ENCODE measurements at regions of chr2 and their contacts with region 1.

Region 1: DNA sequence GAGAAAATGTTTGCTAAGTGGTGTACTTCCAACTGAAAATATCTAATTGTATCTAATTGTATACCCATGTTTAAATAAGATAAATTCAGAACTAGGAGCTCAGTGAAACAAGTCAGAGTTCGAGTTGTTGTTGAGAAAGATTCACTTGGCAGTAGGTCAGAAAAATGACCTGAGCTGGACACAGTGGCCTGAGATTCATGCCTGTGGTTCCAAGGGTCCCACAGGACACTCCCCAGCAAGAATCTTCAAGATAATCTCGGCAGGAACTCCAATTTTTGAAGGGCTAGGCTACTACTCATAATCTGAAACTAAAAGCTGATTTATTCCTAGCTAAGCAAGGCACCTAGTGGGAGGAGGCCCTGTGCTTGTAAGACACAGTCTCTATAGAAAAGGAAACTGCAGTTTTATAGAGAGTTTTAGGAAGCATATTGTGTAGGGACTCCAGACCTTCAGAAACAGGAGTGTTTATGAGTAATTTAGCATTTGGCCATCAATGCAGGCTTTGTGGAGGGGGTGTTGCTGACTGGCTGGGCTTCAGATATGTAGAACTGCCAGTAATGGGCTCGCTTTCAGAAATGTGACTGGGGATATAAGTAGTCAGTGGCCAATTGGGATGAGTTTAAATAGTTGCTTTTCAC is 43.2 kb downstream of the SP140 start:
- DNase-seq: peak; percentile 36
- ATAC-seq: peak; percentile 59
- H3K4me3 ChIP-seq: no peak overlapping the region
- H3K27ac ChIP-seq: peak overlapping the region; percentile 76
- H3K4me1 ChIP-seq: peaks cover 28% of the 10 kb centered on the region
- H3K27me3 ChIP-seq: no peaks in the 10 kb centered on the region
- CTCF ChIP-seq: no peak
- EP300 ChIP-seq: no peak
- POLR2A ChIP-seq: no peak
- RAD21 ChIP-seq: no peak

Region 2: GRCh38 chr2:230234845-230235244 is 33.9 kb before region 1 on chr2:
- CTCF ChIA-PET with region 1: no interaction called
- POLR2A ChIA-PET with region 1: interaction called, 11 read pairs
- RAD21 ChIA-PET with region 1: interaction called, 3 read pairs
- SMC1A ChIA-PET with region 1: interaction called, 3 read pairs
- in situ Hi-C with region 1: no loop called
- intact Hi-C with region 1: loop called (anchors 1 kb)
- DNase-seq: peak; percentile 58
- ATAC-seq: peak; percentile 77
- H3K4me3 ChIP-seq: no peak overlapping the region
- H3K27ac ChIP-seq: no peak overlapping the region
- H3K4me1 ChIP-seq: peaks cover 28% of the 10 kb centered on the region
- H3K27me3 ChIP-seq: no peaks in the 10 kb centered on the region
- CTCF ChIP-seq: no peak
- EP300 ChIP-seq: peak in 1 of 2 experiments; percentile 69; a peak in 1 of 4 replicates
- POLR2A ChIP-seq: no peak
- RAD21 ChIP-seq: no peak

Region 3: GRCh38 chr2:230256733-230257332 is 11.9 kb before region 1 on chr2:
- CTCF ChIA-PET with region 1: interaction called, 4 read pairs
- POLR2A ChIA-PET with region 1: interaction called, 4 read pairs
- RAD21 ChIA-PET with region 1: interaction called, 5 read pairs
- SMC1A ChIA-PET with region 1: interaction called, 7 read pairs
- in situ Hi-C with region 1: no loop called
- intact Hi-C with region 1: loop called (anchors 1 kb)
- DNase-seq: no peak
- ATAC-seq: peak; percentile 71
- H3K4me3 ChIP-seq: 0 out of 2 replicates have a peak overlapping the region, but pooled peaks have one; percentile 18
- H3K27ac ChIP-seq: peak overlapping the region; percentile 41; the same call in 1 of the 2 replicates
- H3K4me1 ChIP-seq: peaks cover 15% of the 10 kb centered on the region
- H3K27me3 ChIP-seq: no peaks in the 10 kb centered on the region
- CTCF ChIP-seq: no peak
- EP300 ChIP-seq: peak in 1 of 2 experiments; percentile 63; a peak in 1 of 4 replicates
- POLR2A ChIP-seq: no peak
- RAD21 ChIP-seq: no peak

Region 4: GRCh38 chr2:230286048-230286447 is 17.3 kb after region 1 on chr2:
- CTCF ChIA-PET with region 1: interaction called, 3 read pairs
- POLR2A ChIA-PET with region 1: no interaction called
- RAD21 ChIA-PET with region 1: interaction called, 4 read pairs
- SMC1A ChIA-PET with region 1: interaction called, 5 read pairs
- in situ Hi-C with region 1: no loop called
- intact Hi-C with region 1: loop called (anchors 1 kb)
- DNase-seq: no peak
- ATAC-seq: no peak
- H3K4me3 ChIP-seq: no peak overlapping the region
- H3K27ac ChIP-seq: no peak overlapping the region
- H3K4me1 ChIP-seq: peaks cover 9% of the 10 kb centered on the region
- H3K27me3 ChIP-seq: no peaks in the 10 kb centered on the region
- CTCF ChIP-seq: no peak
- EP300 ChIP-seq: no peak
- POLR2A ChIP-seq: no peak
- RAD21 ChIP-seq: no peak

Region 5: DNA sequence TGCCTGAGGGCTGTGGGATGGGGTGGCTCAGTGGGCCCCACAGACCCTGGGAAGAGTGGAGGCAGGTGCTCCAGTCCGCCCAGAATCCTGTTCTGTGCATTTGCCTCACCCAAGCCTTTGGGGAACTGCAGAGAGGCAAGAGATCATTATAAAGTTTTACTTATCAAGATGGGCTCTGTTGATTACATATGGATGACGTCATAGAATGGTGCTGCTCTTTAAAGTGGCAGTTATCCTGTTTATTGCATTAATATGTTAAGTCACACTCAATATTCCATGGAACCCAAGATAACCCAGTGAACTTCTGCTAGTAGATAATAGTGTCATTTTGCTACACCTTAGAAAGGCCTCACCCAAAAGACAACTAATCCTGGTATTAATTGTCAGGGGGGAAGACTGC is 102.2 kb after region 1 on chr2:
- CTCF ChIA-PET with region 1: no interaction called
- POLR2A ChIA-PET with region 1: no interaction called
- RAD21 ChIA-PET with region 1: no interaction called
- SMC1A ChIA-PET with region 1: no interaction called
- in situ Hi-C with region 1: no loop called
- intact Hi-C with region 1: no loop called
- DNase-seq: no peak
- ATAC-seq: no peak
- H3K4me3 ChIP-seq: no peak overlapping the region
- H3K27ac ChIP-seq: no peak overlapping the region
- H3K4me1 ChIP-seq: no peaks in the 10 kb centered on the region
- H3K27me3 ChIP-seq: no peaks in the 10 kb centered on the region
- CTCF ChIP-seq: no peak
- EP300 ChIP-seq: no peak
- POLR2A ChIP-seq: no peak
- RAD21 ChIP-seq: no peak

Region 6: GRCh38 chr2:230751062-230751461 is 482.3 kb after region 1 on chr2:
- CTCF ChIA-PET with region 1: no interaction called
- POLR2A ChIA-PET with region 1: no interaction called
- RAD21 ChIA-PET with region 1: no interaction called
- SMC1A ChIA-PET with region 1: no interaction called
- in situ Hi-C with region 1: no loop called
- intact Hi-C with region 1: no loop called
- DNase-seq: no peak
- ATAC-seq: peak; percentile 74
- H3K4me3 ChIP-seq: no peak overlapping the region
- H3K27ac ChIP-seq: no peak overlapping the region
- H3K4me1 ChIP-seq: no peaks in the 10 kb centered on the region
- H3K27me3 ChIP-seq: no peaks in the 10 kb centered on the region
- CTCF ChIP-seq: no peak
- EP300 ChIP-seq: no peak
- POLR2A ChIP-seq: no peak
- RAD21 ChIP-seq: no peak